ENCODE measurements at regions of chr7 and their contacts with region 1.

Region 1: GRCh38 chr7:21253740-21254687 is 173.9 kb upstream of the SP4 start:
- DNase-seq: peak in 8 of 9 donors; percentile 3 to 49 (median 24)
- ATAC-seq: peak; percentile 71
- H3K4me3 ChIP-seq: no peak overlapping the region
- H3K4me3 Mint-ChIP-seq: peak overlapping the region in 8 of 10 donors; percentile 39 to 66 (median 55)
- H3K27ac ChIP-seq: no peak overlapping the region
- H3K27ac Mint-ChIP-seq: no peak overlapping the region
- H3K4me1 ChIP-seq: no peaks in the 10 kb centered on the region
- H3K4me1 Mint-ChIP-seq: peaks cover 0 to 21% (median 0%) of the 10 kb centered on the region in 7 donors
- H3K27me3 ChIP-seq: peaks cover 4 to 18% of the 10 kb centered on the region in 2 donors
- H3K27me3 Mint-ChIP-seq: peaks cover 62 to 77% (median 68%) of the 10 kb centered on the region in 5 donors

Region 2: DNA sequence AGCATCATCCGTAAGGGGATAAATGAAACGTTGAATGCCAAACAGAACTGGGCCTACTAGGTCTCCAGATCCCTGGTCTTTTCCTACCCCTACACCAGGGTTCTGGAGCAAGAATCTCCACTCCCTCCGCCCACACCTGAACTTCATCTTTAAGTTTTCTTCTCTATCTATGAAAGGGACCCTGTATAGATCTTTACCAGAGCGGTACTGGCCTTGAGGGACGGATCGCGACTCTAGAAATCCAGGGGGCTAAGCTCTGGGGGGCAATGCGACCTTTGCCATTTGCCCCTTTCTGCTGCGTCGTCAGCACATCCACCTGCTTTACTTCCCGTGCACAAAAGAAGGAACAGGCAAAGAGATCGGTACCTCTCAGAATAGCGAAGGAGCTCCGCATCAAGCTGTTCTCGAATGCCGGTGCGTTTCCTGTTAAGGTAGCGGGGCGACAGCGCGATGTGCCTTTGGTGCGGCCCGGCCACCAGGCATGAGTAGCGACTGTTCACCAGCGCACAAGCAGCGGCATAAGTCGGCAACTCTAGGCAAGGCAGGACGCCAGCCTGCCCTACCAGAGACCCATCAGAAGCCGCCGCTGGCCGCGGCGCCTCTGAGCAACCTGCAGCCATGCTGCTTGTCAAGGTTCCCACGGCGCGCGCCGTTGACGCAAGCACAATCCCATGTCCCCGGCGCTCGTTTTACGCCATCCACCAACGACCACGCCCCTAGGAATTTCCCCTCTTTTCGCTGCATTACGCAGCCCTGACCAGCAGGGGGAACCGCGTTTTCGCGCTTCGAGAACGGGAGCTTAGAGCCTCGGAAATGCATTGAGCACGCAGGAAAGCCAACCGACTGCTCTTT is 1545.4 kb before region 1 on chr7 and contains the start of gene POLR1F:
- CTCF ChIA-PET with region 1: no interaction called
- POLR2A ChIA-PET with region 1: no interaction called
- intact Hi-C with region 1: loop called in 1 of 2 experiments (anchors 2 kb)
- DNase-seq: peak; percentile 84 to 97 (median 95)
- ATAC-seq: peak; percentile 98
- H3K4me3 ChIP-seq: peak within 1 kb of the TSS; percentile 70
- H3K4me3 Mint-ChIP-seq: peak within 1 kb of the TSS; percentile 95 to 99 (median 97)
- H3K27ac ChIP-seq: peak within 1 kb of the TSS; percentile 77
- H3K27ac Mint-ChIP-seq: peak within 1 kb of the TSS; percentile 89 to 98 (median 95)
- H3K4me1 ChIP-seq: peaks cover 19 to 23% of the 10 kb centered on the region in 2 donors
- H3K4me1 Mint-ChIP-seq: peaks cover 31 to 66% (median 57%) of the 10 kb centered on the region in 7 donors
- H3K27me3 ChIP-seq: no peaks in the 10 kb centered on the region
- H3K27me3 Mint-ChIP-seq: peaks cover 0 to 5% (median 0%) of the 10 kb centered on the region in 5 donors
- total RNA-seq, gene POLR1F: 11.8 to 27.3 (median 19.0) TPM

Region 3: GRCh38 chr7:20895563-20895962 is 358.5 kb before region 1 on chr7:
- CTCF ChIA-PET with region 1: no interaction called
- POLR2A ChIA-PET with region 1: no interaction called
- intact Hi-C with region 1: no loop called
- DNase-seq: no peak
- ATAC-seq: no peak
- H3K4me3 ChIP-seq: no peak overlapping the region
- H3K4me3 Mint-ChIP-seq: no peak overlapping the region
- H3K27ac ChIP-seq: no peak overlapping the region
- H3K27ac Mint-ChIP-seq: no peak overlapping the region
- H3K4me1 ChIP-seq: no peaks in the 10 kb centered on the region
- H3K4me1 Mint-ChIP-seq: no peaks in the 10 kb centered on the region
- H3K27me3 ChIP-seq: no peaks in the 10 kb centered on the region
- H3K27me3 Mint-ChIP-seq: peaks cover 0 to 10% (median 4%) of the 10 kb centered on the region in 5 donors

Region 4: DNA sequence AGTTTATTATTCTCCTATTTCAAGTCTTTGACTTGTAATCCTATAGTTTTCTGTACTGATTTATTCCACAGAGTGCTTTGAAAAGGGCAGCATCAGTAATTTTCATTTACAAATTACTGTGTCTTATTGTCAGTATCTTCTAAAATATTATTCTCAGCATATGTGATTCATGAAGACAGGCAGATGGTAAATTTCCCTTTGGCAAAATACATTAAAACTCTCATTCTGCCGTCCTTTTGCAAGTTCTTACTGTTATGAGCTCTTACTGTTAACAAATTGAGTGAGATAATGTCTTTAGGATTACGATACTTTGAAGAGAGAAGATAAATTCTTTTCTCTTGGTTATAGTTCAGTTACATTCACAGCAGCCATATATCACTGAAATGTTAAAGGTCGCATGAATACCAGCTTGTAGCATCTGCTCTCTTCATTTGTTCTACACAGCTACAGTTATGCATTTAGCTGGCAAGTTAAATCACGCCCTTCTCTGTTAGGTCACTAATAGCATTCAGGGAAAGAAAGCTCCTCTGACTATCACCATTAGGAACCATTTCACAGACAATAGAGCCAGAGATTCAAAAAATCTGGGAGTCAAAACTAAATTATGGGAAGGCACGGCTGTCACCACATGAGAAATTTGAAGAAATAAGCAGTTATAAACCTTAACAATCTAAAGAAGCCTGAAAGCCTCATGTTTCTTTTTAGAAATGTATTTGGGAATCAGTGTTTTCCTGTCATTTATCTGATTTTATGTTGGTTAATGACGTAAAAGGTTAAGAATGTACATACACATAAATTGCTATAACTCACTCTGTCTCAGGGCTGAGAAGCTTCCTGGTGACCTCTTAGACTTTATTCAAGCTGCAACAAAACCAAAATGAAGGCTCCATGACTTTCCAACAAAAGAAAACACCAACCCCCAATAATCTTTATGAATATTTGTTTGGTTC is 64.2 kb after region 1 on chr7:
- CTCF ChIA-PET with region 1: no interaction called
- POLR2A ChIA-PET with region 1: no interaction called
- intact Hi-C with region 1: no loop called
- DNase-seq: no peak
- ATAC-seq: no peak
- H3K4me3 ChIP-seq: no peak overlapping the region
- H3K4me3 Mint-ChIP-seq: no peak overlapping the region
- H3K27ac ChIP-seq: no peak overlapping the region
- H3K27ac Mint-ChIP-seq: no peak overlapping the region
- H3K4me1 ChIP-seq: no peaks in the 10 kb centered on the region
- H3K4me1 Mint-ChIP-seq: peaks cover 0 to 11% (median 7%) of the 10 kb centered on the region in 7 donors
- H3K27me3 ChIP-seq: no peaks in the 10 kb centered on the region
- H3K27me3 Mint-ChIP-seq: peaks cover 0 to 8% (median 0%) of the 10 kb centered on the region in 5 donors

Region 5: DNA sequence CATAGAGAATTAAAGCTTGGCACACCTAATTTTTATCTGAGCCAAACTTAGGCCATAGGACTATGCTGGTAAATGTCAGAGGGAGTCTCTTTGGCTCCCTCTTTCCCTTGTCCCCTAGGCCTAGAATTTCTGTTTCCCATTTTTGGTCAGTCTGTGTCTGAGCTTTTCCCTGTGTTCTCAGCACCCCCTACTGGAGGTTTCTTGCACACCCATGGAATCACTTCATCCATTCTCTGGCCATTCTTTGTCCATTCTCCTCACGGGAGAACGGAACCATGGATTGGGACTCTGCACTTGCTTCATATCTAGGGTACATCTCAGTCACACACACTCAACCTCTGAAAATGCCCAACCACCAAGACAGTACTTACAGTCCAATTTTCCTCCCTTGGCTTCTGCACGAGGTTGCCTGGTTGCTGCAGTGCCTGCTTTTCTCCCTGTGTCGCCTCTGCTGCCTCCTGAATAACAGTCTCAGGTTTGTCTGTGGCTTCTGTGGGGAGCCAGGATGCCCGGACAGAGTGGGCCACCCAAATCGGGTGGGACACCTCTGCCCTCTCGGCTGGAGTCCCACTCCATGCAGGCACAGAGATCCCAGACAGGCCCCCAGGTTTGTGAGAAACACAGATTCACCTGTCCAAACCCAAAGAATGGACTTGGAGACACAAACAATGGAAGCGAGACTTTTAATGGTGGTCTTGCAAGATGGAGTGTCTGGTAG is 253.8 kb after region 1 on chr7:
- CTCF ChIA-PET with region 1: interaction called, 5 read pairs
- POLR2A ChIA-PET with region 1: no interaction called
- intact Hi-C with region 1: loop called (anchors 1 kb)
- DNase-seq: peak in 4 of 9 donors; percentile 6 to 26 (median 16)
- ATAC-seq: peak; percentile 61
- H3K4me3 ChIP-seq: no peak overlapping the region
- H3K4me3 Mint-ChIP-seq: no peak overlapping the region
- H3K27ac ChIP-seq: no peak overlapping the region
- H3K27ac Mint-ChIP-seq: no peak overlapping the region
- H3K4me1 ChIP-seq: no peaks in the 10 kb centered on the region
- H3K4me1 Mint-ChIP-seq: peaks cover 0 to 7% (median 3%) of the 10 kb centered on the region in 7 donors
- H3K27me3 ChIP-seq: no peaks in the 10 kb centered on the region
- H3K27me3 Mint-ChIP-seq: no peaks in the 10 kb centered on the region

Region 6: GRCh38 chr7:21568762-21569161 is 314.7 kb after region 1 on chr7:
- CTCF ChIA-PET with region 1: interaction called, 3 read pairs
- POLR2A ChIA-PET with region 1: no interaction called
- intact Hi-C with region 1: loop called (anchors 1 to 2 kb)
- DNase-seq: peak in 2 of 9 donors; percentile 7 to 16
- ATAC-seq: no peak
- H3K4me3 ChIP-seq: no peak overlapping the region
- H3K4me3 Mint-ChIP-seq: no peak overlapping the region
- H3K27ac ChIP-seq: no peak overlapping the region
- H3K27ac Mint-ChIP-seq: no peak overlapping the region
- H3K4me1 ChIP-seq: no peaks in the 10 kb centered on the region
- H3K4me1 Mint-ChIP-seq: no peaks in the 10 kb centered on the region
- H3K27me3 ChIP-seq: no peaks in the 10 kb centered on the region
- H3K27me3 Mint-ChIP-seq: peaks cover 0 to 12% (median 3%) of the 10 kb centered on the region in 5 donors

Region 7: GRCh38 chr7:21850531-21851285 is 596.7 kb after region 1 on chr7:
- CTCF ChIA-PET with region 1: no interaction called
- POLR2A ChIA-PET with region 1: no interaction called
- intact Hi-C with region 1: loop called in 1 of 2 experiments (anchors 5 kb)
- DNase-seq: no peak
- ATAC-seq: no peak
- H3K4me3 ChIP-seq: peak overlapping the region; percentile 27
- H3K4me3 Mint-ChIP-seq: peak overlapping the region in 9 of 10 donors; percentile 13 to 91 (median 78)
- H3K27ac ChIP-seq: no peak overlapping the region
- H3K27ac Mint-ChIP-seq: peak overlapping the region in 8 of 9 donors; percentile 85 to 97 (median 92)
- H3K4me1 ChIP-seq: peaks cover 0 to 20% of the 10 kb centered on the region in 2 donors
- H3K4me1 Mint-ChIP-seq: peaks cover 6 to 44% (median 34%) of the 10 kb centered on the region in 7 donors
- H3K27me3 ChIP-seq: no peaks in the 10 kb centered on the region
- H3K27me3 Mint-ChIP-seq: peaks cover 0 to 5% (median 0%) of the 10 kb centered on the region in 5 donors